Common myeloid progenitor, CD34-positive (primary cell): ENCODE measurements at regions of chr12 and their contacts with region 1.

Region 1: GRCh38 chr12:8078398-8078797 is 3.7 kb upstream of the NECAP1 start:
- DNase-seq: peak; percentile 87 to 94 (median 92)
- H3K4me3 ChIP-seq: no peak overlapping the region
- H3K27ac ChIP-seq: no peak overlapping the region
- H3K4me1 ChIP-seq: peaks cover 19 to 41% (median 34%) of the 10 kb centered on the region in 4 experiments
- H3K27me3 ChIP-seq: no peaks in the 10 kb centered on the region

Region 2: DNA sequence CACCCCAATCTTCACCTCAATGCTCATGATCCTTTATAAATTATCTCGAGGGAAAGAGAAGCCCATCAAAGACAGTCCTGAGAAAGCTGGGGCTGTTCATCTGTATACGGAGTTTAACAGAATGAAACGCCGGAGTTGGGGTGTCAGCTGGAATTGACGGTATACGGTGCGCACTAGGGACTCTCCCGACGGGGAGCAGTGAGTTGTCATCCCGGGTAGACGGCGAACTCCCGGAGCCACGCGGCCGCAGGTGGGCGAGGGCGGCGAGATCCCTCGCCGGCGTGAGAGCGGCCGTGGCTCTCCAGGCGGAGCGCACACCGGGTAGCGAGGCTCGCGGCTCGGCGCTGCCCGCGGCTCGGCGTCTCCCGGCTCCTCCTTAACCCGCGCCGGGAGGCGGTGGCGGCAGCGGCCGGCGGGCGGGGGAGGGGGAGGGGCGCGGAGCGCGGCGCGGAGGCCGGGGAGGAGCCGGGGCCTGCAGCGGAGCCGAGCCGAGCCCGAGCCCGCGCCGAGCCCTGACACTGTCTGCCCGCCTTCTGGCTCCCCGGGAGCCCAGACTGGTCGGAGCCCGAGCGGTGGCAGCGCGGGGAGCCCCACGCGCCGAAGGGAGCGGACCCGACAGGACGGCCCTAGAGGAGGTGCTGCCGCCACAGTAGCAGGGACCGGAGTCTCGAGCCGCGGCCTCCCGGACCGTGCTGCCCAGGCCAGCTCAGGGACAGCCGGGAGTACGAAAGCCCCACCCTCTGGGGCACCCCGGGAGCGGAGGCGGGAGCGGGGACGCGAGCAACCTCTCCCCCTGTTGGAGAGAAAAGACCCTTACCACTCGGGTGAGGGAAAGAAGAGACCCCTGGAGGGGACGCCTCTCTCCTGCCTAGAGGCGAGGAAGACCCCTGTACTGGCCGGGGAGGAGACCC is 45.9 kb before region 1 on chr12 and contains the start of gene FOXJ2:
- CTCF ChIA-PET with region 1: interaction called, 342 read pairs
- POLR2A ChIA-PET with region 1: interaction called, 3 read pairs
- DNase-seq: peak; percentile 60 to 79 (median 76)
- H3K4me3 ChIP-seq: peak within 1 kb of the TSS; percentile 74 to 93 (median 84)
- H3K27ac ChIP-seq: peak within 1 kb of the TSS; percentile 54 to 84
- H3K4me1 ChIP-seq: peaks cover 24 to 55% (median 46%) of the 10 kb centered on the region in 4 experiments
- H3K27me3 ChIP-seq: no peaks in the 10 kb centered on the region

Region 3: GRCh38 chr12:8057839-8058238 is 20.6 kb before region 1 on chr12:
- CTCF ChIA-PET with region 1: interaction called, 44 read pairs
- POLR2A ChIA-PET with region 1: interaction called, 3 read pairs
- DNase-seq: no peak
- H3K4me3 ChIP-seq: no peak overlapping the region
- H3K27ac ChIP-seq: no peak overlapping the region
- H3K4me1 ChIP-seq: peaks cover 0 to 14% (median under 1%) of the 10 kb centered on the region in 4 experiments
- H3K27me3 ChIP-seq: no peaks in the 10 kb centered on the region

Region 4: DNA sequence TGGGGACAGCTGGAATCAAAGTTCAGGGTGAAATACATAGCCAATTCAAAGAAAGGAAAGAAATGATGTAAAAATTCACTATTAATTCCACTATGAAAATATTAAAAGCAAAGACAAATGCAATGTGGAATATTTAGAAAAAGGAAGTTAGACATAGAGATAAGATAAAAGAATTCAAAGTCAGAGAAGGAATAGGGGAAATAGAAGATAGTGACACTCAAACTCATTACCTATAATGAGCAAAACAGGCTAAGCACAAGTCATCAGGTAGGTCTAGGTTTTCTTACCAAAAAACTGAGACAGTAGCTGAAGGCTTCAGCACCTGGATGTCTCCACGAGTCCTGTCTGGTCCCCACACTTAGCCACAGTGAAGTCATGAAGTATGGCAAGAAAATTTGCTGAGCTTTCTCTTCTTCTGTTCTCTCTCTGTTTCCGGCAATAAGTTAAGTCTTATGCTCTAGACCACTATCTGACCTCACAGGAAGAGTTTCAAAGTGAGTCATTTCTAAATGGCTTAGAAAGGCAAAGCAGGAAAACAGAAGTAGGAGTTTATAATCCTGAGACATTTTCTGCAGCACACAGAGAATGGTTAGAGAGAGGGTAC is 12.3 kb before region 1 on chr12 and contains the start of gene C3AR1:
- CTCF ChIA-PET with region 1: interaction called, 33 read pairs
- POLR2A ChIA-PET with region 1: interaction called, 4 read pairs
- DNase-seq: peak; percentile 78 to 93 (median 87)
- H3K4me3 ChIP-seq: peak within 1 kb of the TSS in 6 of 7 experiments; percentile 4 to 57 (median 20)
- H3K27ac ChIP-seq: peak within 1 kb of the TSS; percentile 25 to 65
- H3K4me1 ChIP-seq: peaks cover 16 to 63% (median 35%) of the 10 kb centered on the region in 4 experiments
- H3K27me3 ChIP-seq: no peaks in the 10 kb centered on the region